PC-9 (cell line): ENCODE measurements at regions of chr4 and their contacts with region 1.

Region 1: GRCh38 chr4:158020176-158020575 is 152.6 kb downstream of the GASK1B start:
- DNase-seq: peak in 1 of 2 experiments; percentile 8
- H3K4me3 ChIP-seq: no peak overlapping the region
- H3K27ac ChIP-seq: peak overlapping the region; percentile 48
- H3K4me1 ChIP-seq: peaks cover 34% of the 10 kb centered on the region
- H3K27me3 ChIP-seq: no peaks in the 10 kb centered on the region
- CTCF ChIP-seq: no peak

Region 2: GRCh38 chr4:157521916-157522315 is 498.3 kb before region 1 on chr4:
- CTCF ChIA-PET with region 1: no interaction called
- POLR2A ChIA-PET with region 1: no interaction called
- intact Hi-C with region 1: no loop called
- DNase-seq: no peak
- H3K4me3 ChIP-seq: no peak overlapping the region
- H3K27ac ChIP-seq: no peak overlapping the region
- H3K4me1 ChIP-seq: no peaks in the 10 kb centered on the region
- H3K27me3 ChIP-seq: no peaks in the 10 kb centered on the region
- CTCF ChIP-seq: no peak

Region 3: GRCh38 chr4:157992038-157992705 is 28.0 kb before region 1 on chr4:
- CTCF ChIA-PET with region 1: no interaction called
- POLR2A ChIA-PET with region 1: no interaction called
- intact Hi-C with region 1: loop called (anchors 2 kb)
- DNase-seq: peak in 1 of 2 experiments; percentile 30
- H3K4me3 ChIP-seq: no peak overlapping the region
- H3K27ac ChIP-seq: no peak overlapping the region
- H3K4me1 ChIP-seq: peaks cover 9% of the 10 kb centered on the region
- H3K27me3 ChIP-seq: no peaks in the 10 kb centered on the region
- CTCF ChIP-seq: peak; percentile 84